Natural killer cell (primary cell): ENCODE measurements at regions of chr2 and their contacts with region 1.

Region 1: GRCh38 chr2:108637304-108637669 is 82.0 kb upstream of the RANBP2 start:
- DNase-seq: no peak
- ATAC-seq: peak in 2 of 3 donors; percentile 25 to 58
- H3K4me3 ChIP-seq: no peak overlapping the region
- H3K4me3 Mint-ChIP-seq: no peak overlapping the region
- H3K27ac ChIP-seq: no peak overlapping the region
- H3K27ac Mint-ChIP-seq: peak overlapping the region in 1 of 2 donors; percentile 31
- H3K4me1 ChIP-seq: peaks cover 12% of the 10 kb centered on the region
- H3K4me1 Mint-ChIP-seq: peaks cover 14 to 24% of the 10 kb centered on the region in 2 donors
- H3K27me3 ChIP-seq: no peaks in the 10 kb centered on the region
- H3K27me3 Mint-ChIP-seq: no peaks in the 10 kb centered on the region
- CTCF ChIP-seq: no peak

Region 2: DNA sequence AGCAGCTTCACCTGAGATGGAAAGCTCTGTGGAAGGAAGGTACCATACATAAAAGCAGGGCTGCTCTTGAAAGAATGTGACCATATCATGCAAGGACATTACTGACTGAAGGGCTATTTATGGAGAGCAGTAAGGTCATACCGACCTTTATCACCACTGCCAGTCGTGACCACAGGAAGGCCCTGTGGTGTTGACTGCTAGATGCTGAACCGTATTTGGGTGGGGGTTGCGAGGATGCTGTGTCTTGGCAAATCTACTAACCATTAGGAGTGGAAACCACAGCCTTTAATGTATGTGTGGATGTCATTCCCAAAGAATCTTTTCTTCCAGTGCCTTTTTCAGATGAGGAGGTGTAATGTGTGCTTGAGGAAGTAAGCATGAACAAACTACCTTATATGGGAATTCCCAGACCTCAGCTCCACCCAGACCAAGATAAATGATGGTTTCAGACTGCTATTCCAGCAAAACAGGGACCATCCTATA is 42.3 kb before region 1 on chr2:
- intact Hi-C with region 1: loop called (anchors 1 kb)
- DNase-seq: no peak
- ATAC-seq: peak; percentile 49 to 74 (median 69)
- H3K4me3 ChIP-seq: no peak overlapping the region
- H3K4me3 Mint-ChIP-seq: peak overlapping the region; percentile 58
- H3K27ac ChIP-seq: peak overlapping the region; percentile 53
- H3K27ac Mint-ChIP-seq: peak overlapping the region; percentile 41 to 83
- H3K4me1 ChIP-seq: peaks cover 11% of the 10 kb centered on the region
- H3K4me1 Mint-ChIP-seq: peaks cover 30 to 38% of the 10 kb centered on the region in 2 donors
- H3K27me3 ChIP-seq: no peaks in the 10 kb centered on the region
- H3K27me3 Mint-ChIP-seq: no peaks in the 10 kb centered on the region
- CTCF ChIP-seq: no peak

Region 3: GRCh38 chr2:108607706-108608301 is 29.5 kb before region 1 on chr2:
- intact Hi-C with region 1: loop called (anchors 2 kb)
- DNase-seq: peak in 1 of 2 donors; percentile 75
- ATAC-seq: no peak
- H3K4me3 ChIP-seq: no peak overlapping the region
- H3K4me3 Mint-ChIP-seq: no peak overlapping the region
- H3K27ac ChIP-seq: no peak overlapping the region
- H3K27ac Mint-ChIP-seq: peak overlapping the region in 1 of 2 donors; percentile 2
- H3K4me1 ChIP-seq: peaks cover 28% of the 10 kb centered on the region
- H3K4me1 Mint-ChIP-seq: peaks cover 39% of the 10 kb centered on the region in 2 donors
- H3K27me3 ChIP-seq: no peaks in the 10 kb centered on the region
- H3K27me3 Mint-ChIP-seq: no peaks in the 10 kb centered on the region
- CTCF ChIP-seq: peak; percentile 48

Region 4: GRCh38 chr2:108621087-108621559 is 16.2 kb before region 1 on chr2:
- intact Hi-C with region 1: loop called (anchors 1 kb)
- DNase-seq: peak; percentile 45 to 88
- ATAC-seq: peak; percentile 95 to 97 (median 95)
- H3K4me3 ChIP-seq: peak overlapping the region; percentile 16
- H3K4me3 Mint-ChIP-seq: peak overlapping the region; percentile 92
- H3K27ac ChIP-seq: peak overlapping the region; percentile 73
- H3K27ac Mint-ChIP-seq: peak overlapping the region; percentile 87 to 96
- H3K4me1 ChIP-seq: peaks cover 22% of the 10 kb centered on the region
- H3K4me1 Mint-ChIP-seq: peaks cover 46 to 48% of the 10 kb centered on the region in 2 donors
- H3K27me3 ChIP-seq: no peaks in the 10 kb centered on the region
- H3K27me3 Mint-ChIP-seq: no peaks in the 10 kb centered on the region
- CTCF ChIP-seq: no peak